ENCODE measurements at regions of chr4 and their contacts with region 1.

Region 1: DNA sequence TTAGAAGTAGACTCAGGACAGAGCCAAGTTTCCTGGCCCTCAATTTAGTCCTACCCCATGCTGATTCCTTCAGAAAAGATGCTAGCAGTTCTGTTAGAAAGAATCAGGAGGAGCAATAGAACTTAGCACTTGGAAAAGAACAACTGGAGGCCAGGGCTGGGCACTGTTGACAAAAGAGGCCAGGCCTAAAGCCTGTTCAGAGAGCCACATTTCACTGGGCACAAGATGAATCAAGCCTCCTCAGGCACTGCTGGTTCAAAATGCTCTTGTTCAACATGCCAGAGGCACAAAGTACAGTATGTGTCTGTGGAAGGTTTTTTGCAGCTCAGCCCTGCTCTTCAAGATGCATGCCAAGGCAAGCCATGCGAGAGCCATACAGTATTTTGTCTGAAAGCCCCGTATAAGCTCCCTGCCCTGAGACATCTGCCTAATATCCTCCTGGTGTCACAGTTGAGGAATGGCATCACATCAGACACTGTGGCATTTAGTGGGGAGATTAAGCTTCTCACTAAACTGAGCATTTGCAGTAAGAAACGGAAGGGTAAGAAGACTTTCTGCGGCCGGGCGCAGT is 53.7 kb downstream of the RASL11B start:
- DNase-seq: no peak
- H3K4me3 ChIP-seq: no peak overlapping the region
- H3K27ac ChIP-seq: no peak overlapping the region
- H3K4me1 ChIP-seq: no peaks in the 10 kb centered on the region
- H3K27me3 ChIP-seq: no peaks in the 10 kb centered on the region
- CTCF ChIP-seq: no peak

Region 2: DNA sequence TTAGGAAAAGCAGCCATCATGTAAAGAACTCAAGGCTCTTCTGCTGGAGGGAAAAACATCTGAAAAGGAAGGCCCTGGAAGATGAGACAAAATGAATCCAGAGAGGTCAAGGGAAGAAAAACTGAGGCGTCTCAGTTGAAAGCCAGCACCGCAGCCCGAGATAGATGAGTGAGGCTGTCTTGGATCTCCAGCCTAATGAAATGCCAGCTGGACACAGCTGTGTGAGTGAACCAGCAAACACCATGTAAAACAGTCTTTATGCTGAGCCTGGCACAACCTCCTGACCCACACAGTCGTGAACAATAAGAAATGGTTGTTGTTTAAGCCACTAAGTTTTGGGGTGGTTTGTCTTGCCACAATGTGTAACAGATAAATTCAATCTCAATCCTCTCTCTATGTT is 102.3 kb before region 1 on chr4:
- CTCF ChIA-PET with region 1: no interaction called
- POLR2A ChIA-PET with region 1: no interaction called
- intact Hi-C with region 1: loop called (anchors 5 kb)
- DNase-seq: no peak
- H3K4me3 ChIP-seq: no peak overlapping the region
- H3K27ac ChIP-seq: no peak overlapping the region
- H3K4me1 ChIP-seq: no peaks in the 10 kb centered on the region
- H3K27me3 ChIP-seq: no peaks in the 10 kb centered on the region
- CTCF ChIP-seq: no peak

Region 3: DNA sequence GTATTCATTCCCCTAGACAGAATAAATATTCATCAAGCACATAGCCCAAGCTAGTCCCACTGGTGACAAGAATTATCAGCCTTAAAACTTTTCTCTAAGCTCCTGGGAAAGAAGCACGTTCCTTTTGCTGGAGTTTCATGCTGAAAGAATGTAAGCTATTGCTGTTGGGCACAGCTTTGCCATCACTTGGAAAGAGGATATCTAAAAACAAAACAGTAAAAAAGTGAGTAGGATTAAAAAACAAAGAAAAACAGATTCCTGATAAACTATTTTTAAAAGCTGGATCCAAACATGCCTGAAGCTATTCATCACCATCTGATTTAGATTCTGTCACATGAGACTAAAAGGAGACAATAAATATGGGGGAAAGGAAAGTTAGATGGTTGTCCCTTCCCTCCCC is 273.2 kb after region 1 on chr4:
- CTCF ChIA-PET with region 1: no interaction called
- POLR2A ChIA-PET with region 1: no interaction called
- intact Hi-C with region 1: no loop called
- DNase-seq: no peak
- H3K4me3 ChIP-seq: no peak overlapping the region
- H3K27ac ChIP-seq: no peak overlapping the region
- H3K4me1 ChIP-seq: no peaks in the 10 kb centered on the region
- H3K27me3 ChIP-seq: peaks cover 20% of the 10 kb centered on the region
- CTCF ChIP-seq: no peak

Measured in A673 (cell line).